Activated CD4-positive, alpha-beta T cell treated with anti-CD3 and anti-CD28 coated beads, Interleukin-2, amount 10 ng/mL, durations not matched to agents 24 days and 14 days (primary cell): ENCODE measurements at regions of chr6 and their contacts with region 1.

Region 1: DNA sequence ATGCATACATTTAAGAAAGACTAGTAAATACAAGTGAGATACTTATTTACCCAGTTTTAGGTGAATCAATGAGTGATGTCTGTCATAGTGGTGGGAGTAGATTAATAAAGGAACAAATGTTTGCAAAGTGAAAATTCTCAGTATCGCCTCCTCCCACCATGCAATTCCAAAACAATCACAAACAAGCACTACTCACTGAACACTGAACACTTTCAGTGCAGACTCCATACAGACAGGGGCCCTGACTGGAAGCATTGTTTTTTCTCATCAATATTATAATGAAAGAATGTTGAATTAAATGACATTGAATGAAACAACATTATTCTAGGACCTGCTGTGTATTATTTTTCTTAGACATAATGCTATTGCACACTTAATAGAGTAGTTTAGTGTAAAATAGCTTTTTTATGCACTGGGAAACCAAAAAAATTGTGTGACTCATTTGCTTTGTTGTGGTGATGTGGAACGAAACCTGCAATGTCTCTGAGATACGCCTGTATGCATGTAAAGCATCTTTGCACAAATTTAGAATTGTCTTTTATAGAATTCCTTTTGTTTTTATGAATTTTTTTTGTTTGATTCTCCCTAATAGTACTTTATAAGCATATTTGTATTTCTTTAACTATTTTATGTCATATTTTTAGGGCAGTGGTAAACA is 317.5 kb downstream of the UTRN start:
- DNase-seq: peak; percentile 79
- H3K4me3 Mint-ChIP-seq: peak overlapping the region; percentile 48
- H3K27ac Mint-ChIP-seq: peak overlapping the region; percentile 82
- H3K4me1 Mint-ChIP-seq: peaks cover 45% of the 10 kb centered on the region
- H3K27me3 Mint-ChIP-seq: no peaks in the 10 kb centered on the region

Region 2: DNA sequence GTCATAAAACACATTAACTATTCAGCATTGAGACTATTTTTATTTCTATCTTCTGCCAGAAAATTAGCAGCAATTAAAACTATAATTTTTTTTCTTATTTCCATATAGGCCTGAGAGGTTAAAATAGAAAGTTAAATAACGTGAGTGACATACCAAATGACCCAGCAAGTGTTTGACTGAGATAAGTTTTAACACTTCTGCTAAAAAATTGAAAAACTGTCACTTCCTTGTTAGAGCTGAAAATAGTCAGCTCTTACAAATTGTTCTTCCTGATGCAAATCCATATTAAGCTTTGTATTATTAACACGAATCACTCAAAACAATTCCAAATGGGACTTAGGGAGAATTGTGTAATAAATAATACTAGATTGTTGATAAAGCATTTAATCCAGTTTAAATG is 478.8 kb before region 1 on chr6:
- intact Hi-C with region 1: no loop called
- DNase-seq: no peak
- H3K4me3 Mint-ChIP-seq: no peak overlapping the region
- H3K27ac Mint-ChIP-seq: no peak overlapping the region
- H3K4me1 Mint-ChIP-seq: no peaks in the 10 kb centered on the region
- H3K27me3 Mint-ChIP-seq: peaks cover 6% of the 10 kb centered on the region

Region 3: DNA sequence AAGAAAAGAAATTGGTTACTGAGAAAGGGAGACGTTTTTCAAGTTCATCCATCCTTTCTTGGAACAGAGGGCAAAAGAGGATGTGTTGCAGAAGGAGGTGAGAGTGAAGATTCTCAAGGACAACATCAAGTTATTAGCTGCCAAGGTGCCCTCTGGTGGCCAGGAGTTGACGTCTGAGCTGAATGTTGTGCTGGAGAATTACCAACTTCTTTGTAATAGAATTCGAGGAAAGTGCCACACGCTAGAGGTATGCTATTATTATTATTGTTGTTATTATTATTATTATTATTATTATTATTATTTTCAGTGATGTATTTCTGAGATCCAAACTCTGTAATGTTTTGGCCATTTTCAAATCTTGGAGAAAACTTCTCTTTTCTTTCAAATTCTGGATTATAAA is 120.5 kb before region 1 on chr6:
- intact Hi-C with region 1: no loop called
- DNase-seq: peak; percentile 89
- H3K4me3 Mint-ChIP-seq: no peak overlapping the region
- H3K27ac Mint-ChIP-seq: no peak overlapping the region
- H3K4me1 Mint-ChIP-seq: peaks cover 9% of the 10 kb centered on the region
- H3K27me3 Mint-ChIP-seq: no peaks in the 10 kb centered on the region

Region 4: GRCh38 chr6:144613859-144614258 is 11.2 kb after region 1 on chr6:
- intact Hi-C with region 1: loop called (anchors 1 kb)
- DNase-seq: no peak
- H3K4me3 Mint-ChIP-seq: no peak overlapping the region
- H3K27ac Mint-ChIP-seq: no peak overlapping the region
- H3K4me1 Mint-ChIP-seq: peaks cover 15% of the 10 kb centered on the region
- H3K27me3 Mint-ChIP-seq: no peaks in the 10 kb centered on the region

Region 5: GRCh38 chr6:144653885-144654505 is 51.3 kb after region 1 on chr6:
- intact Hi-C with region 1: loop called (anchors 5 kb)
- DNase-seq: no peak
- H3K4me3 Mint-ChIP-seq: no peak overlapping the region
- H3K27ac Mint-ChIP-seq: peak overlapping the region; percentile 48
- H3K4me1 Mint-ChIP-seq: peaks cover 21% of the 10 kb centered on the region
- H3K27me3 Mint-ChIP-seq: no peaks in the 10 kb centered on the region

Region 6: DNA sequence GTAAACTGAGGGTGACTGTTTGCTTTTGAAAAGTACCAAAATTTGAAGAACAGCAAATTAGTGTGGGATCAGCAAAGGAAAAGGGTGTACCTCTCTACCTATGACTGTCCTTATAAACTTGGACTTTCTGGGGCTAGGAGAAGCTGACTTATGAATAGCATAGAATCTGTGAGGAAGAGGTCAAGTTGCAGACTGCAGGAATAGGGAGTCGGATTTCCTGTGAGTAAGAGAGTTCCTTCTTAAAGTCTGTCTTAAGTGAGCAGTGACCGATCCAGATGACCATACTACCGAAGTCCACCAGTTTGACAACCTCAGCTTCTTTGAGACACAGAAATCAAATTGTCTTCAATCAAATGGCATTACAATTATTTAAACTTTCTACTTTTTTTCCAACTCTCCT is 391.2 kb after region 1 on chr6:
- intact Hi-C with region 1: no loop called
- DNase-seq: no peak
- H3K4me3 Mint-ChIP-seq: no peak overlapping the region
- H3K27ac Mint-ChIP-seq: no peak overlapping the region
- H3K4me1 Mint-ChIP-seq: no peaks in the 10 kb centered on the region
- H3K27me3 Mint-ChIP-seq: peaks cover 26% of the 10 kb centered on the region

Region 7: DNA sequence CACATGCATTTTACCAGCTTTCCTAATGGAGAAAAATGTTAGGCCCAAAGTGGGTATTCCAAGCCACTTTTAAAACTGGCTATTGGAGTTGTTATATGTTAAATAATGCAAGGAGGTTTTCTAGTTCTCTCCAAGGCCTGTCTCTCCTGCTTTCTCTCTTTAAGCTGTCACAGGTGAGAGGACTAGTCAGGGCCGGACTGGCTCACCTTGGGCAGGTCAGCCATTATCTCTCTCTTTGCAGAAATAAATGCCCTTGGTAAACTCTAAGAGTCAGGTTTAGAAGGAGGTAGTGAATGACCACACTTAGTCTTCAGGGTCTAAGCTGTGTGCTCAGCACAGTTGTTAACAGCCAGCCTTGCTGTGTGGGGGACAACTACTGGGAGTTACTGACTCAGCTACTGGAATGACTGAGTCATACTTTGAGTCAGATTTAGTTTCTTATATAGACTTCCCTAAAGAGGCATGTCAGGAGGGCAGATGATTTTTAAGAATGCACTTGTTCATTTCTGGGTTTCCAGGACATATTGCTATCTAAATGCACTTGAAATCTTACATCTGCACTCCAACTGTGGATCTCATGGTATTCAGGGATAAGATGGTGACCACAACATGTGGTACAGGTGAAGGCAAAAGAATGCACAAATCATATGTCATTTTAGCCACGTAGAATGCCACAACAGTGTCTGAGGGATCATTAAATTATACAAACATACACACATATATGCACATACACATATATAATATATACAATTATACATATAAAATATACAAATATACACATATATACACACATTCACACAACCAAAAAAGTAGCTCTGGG is 413.3 kb after region 1 on chr6:
- intact Hi-C with region 1: loop called (anchors 5 kb)
- DNase-seq: peak; percentile 63
- H3K4me3 Mint-ChIP-seq: no peak overlapping the region
- H3K27ac Mint-ChIP-seq: peak overlapping the region; percentile 2
- H3K4me1 Mint-ChIP-seq: peaks cover 19% of the 10 kb centered on the region
- H3K27me3 Mint-ChIP-seq: peaks cover 3% of the 10 kb centered on the region

Region 8: GRCh38 chr6:145823328-145823944 is 1220.8 kb after region 1 on chr6:
- intact Hi-C with region 1: loop called (anchors 5 kb)
- DNase-seq: no peak
- H3K4me3 Mint-ChIP-seq: no peak overlapping the region
- H3K27ac Mint-ChIP-seq: no peak overlapping the region
- H3K4me1 Mint-ChIP-seq: peaks cover 35% of the 10 kb centered on the region
- H3K27me3 Mint-ChIP-seq: peaks cover 3% of the 10 kb centered on the region